Endothelial cell of umbilical vein (primary cell): ENCODE measurements at regions of chr3 and their contacts with region 1.

Region 1: GRCh38 chr3:39189959-39190269 is 2.5 kb downstream of the XIRP1 start:
- DNase-seq: peak; percentile 67
- H3K4me3 ChIP-seq: no peak overlapping the region
- H3K27ac ChIP-seq: no peak overlapping the region
- H3K4me1 ChIP-seq: no peaks in the 10 kb centered on the region
- H3K27me3 ChIP-seq: no peaks in the 10 kb centered on the region
- CTCF ChIP-seq: peak; percentile 74 to 78
- POLR2A ChIP-seq: no peak

Region 2: DNA sequence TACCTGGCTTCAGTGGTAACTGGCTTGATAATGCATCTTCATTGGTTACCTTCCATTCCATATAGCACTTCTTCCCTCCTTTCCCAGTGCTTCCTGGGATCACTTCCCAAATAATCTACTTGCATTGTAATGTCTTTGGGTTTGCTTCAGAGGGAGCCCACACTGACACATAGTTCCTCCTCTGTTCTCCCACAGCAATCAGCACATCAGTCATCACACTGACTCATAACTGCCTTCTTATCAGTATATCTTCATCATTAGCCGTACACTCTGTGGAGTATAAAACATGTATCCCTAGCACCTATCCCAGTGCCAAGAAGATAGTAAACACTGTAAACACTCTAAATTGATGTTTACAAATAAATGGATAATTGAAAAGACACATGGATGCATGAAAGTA is 282.5 kb before region 1 on chr3:
- CTCF ChIA-PET with region 1: no interaction called
- POLR2A ChIA-PET with region 1: no interaction called
- dilution Hi-C with region 1: no loop called
- intact Hi-C with region 1: no loop called
- DNase-seq: no peak
- H3K4me3 ChIP-seq: no peak overlapping the region
- H3K27ac ChIP-seq: no peak overlapping the region
- H3K4me1 ChIP-seq: no peaks in the 10 kb centered on the region
- H3K27me3 ChIP-seq: peaks cover 0 to 2% of the 10 kb centered on the region in 2 experiments
- CTCF ChIP-seq: no peak
- POLR2A ChIP-seq: no peak

Region 3: DNA sequence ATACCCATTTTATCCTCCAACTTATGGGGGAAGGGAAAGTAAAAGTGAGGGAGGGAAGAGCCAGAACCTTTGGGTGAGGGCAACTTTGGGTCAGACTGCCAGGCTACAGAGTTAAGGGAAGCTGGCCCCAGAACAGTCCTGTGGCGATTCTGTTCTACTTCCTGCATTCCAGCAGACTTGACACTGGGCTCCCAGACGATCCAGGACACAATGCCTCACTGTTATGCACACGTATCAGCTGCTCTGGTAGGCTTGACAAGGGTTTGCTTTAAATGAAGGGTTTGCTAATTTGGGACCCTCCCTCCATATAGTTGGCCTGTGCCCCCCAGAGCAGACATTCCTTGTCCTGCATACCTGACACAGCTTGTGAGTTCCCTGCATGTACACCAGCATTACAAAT is 93.1 kb before region 1 on chr3:
- CTCF ChIA-PET with region 1: no interaction called
- POLR2A ChIA-PET with region 1: no interaction called
- dilution Hi-C with region 1: no loop called
- intact Hi-C with region 1: no loop called
- DNase-seq: no peak
- H3K4me3 ChIP-seq: no peak overlapping the region
- H3K27ac ChIP-seq: no peak overlapping the region
- H3K4me1 ChIP-seq: no peaks in the 10 kb centered on the region
- H3K27me3 ChIP-seq: no peaks in the 10 kb centered on the region
- CTCF ChIP-seq: no peak
- POLR2A ChIP-seq: no peak

Region 4: GRCh38 chr3:39107388-39108199 is 82.3 kb before region 1 on chr3 and contains the starts of genes GORASP1 and TTC21A:
- CTCF ChIA-PET with region 1: interaction called, 5 read pairs
- POLR2A ChIA-PET with region 1: no interaction called
- dilution Hi-C with region 1: loop called (anchors 5 kb)
- intact Hi-C with region 1: no loop called
- DNase-seq: peak; percentile 86
- H3K4me3 ChIP-seq: peak within 1 kb of the TSS; percentile 69 to 84 (median 78)
- H3K27ac ChIP-seq: peak within 1 kb of the TSS; percentile 75
- H3K4me1 ChIP-seq: peaks cover 18% of the 10 kb centered on the region
- H3K27me3 ChIP-seq: no peaks in the 10 kb centered on the region
- CTCF ChIP-seq: no peak
- POLR2A ChIP-seq: peak; percentile 67
- total RNA-seq, gene GORASP1: 68.0 and 74.7 TPM in 2 replicates
- total RNA-seq, gene TTC21A: 6.3 and 7.8 TPM in 2 replicates

Region 5: GRCh38 chr3:39166134-39166731 is 23.7 kb before region 1 on chr3:
- CTCF ChIA-PET with region 1: interaction called, 10 read pairs
- POLR2A ChIA-PET with region 1: no interaction called
- dilution Hi-C with region 1: no loop called
- intact Hi-C with region 1: no loop called
- DNase-seq: peak; percentile 94
- H3K4me3 ChIP-seq: no peak overlapping the region
- H3K27ac ChIP-seq: peak overlapping the region; percentile 79
- H3K4me1 ChIP-seq: peaks cover 29% of the 10 kb centered on the region
- H3K27me3 ChIP-seq: no peaks in the 10 kb centered on the region
- CTCF ChIP-seq: no peak
- POLR2A ChIP-seq: peak; percentile 37

Region 6: DNA sequence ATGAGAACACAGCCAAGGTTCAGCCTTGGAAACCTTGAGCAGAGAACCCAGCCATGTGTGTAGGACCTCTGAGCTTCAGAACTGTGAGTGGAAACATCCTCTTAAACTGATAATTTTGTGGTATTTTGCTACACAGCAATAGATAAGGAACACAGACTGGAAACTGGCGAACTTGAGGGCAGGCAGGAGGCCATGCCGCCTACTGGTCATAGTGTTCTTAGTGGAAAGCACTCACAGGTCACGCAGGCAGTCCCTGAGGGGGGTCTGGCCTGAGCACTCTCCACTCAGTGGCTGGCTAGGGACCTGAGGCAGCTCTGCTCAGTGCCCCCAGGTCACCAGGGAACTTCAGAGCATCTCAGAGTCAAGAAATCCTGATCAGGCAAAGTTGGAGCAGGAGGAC is 12.2 kb after region 1 on chr3:
- CTCF ChIA-PET with region 1: interaction called, 13 read pairs
- POLR2A ChIA-PET with region 1: no interaction called
- dilution Hi-C with region 1: no loop called
- intact Hi-C with region 1: no loop called
- DNase-seq: no peak
- H3K4me3 ChIP-seq: no peak overlapping the region
- H3K27ac ChIP-seq: no peak overlapping the region
- H3K4me1 ChIP-seq: no peaks in the 10 kb centered on the region
- H3K27me3 ChIP-seq: peaks cover 6 to 12% of the 10 kb centered on the region in 2 experiments
- CTCF ChIP-seq: peak in 1 of 2 donors; percentile 14
- POLR2A ChIP-seq: no peak

Region 7: DNA sequence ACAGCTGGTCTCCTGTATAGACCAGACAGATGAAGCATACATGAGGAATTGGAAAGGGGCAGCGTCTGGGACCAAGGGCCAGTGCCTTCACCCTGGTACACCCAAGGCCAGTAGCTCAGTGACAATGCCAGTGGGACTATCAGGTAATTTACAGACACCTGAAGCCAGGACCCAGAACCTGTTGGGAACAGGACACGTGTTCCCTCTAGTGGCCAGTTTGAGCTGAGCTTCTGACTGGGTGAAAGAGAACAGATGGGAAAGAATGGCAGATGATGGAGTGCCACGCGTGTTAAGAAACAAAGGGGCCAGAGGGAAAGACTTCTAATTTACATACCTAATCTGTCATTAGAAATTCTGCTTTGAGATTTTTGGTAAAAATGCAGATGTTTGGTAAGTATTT is 188.2 kb after region 1 on chr3:
- CTCF ChIA-PET with region 1: interaction called, 12 read pairs
- POLR2A ChIA-PET with region 1: no interaction called
- dilution Hi-C with region 1: no loop called
- intact Hi-C with region 1: loop called (anchors 1 kb)
- DNase-seq: peak; percentile 38
- H3K4me3 ChIP-seq: no peak overlapping the region
- H3K27ac ChIP-seq: no peak overlapping the region
- H3K4me1 ChIP-seq: peaks cover 18% of the 10 kb centered on the region
- H3K27me3 ChIP-seq: peaks cover 0 to 2% of the 10 kb centered on the region in 2 experiments
- CTCF ChIP-seq: peak; percentile 69 to 77
- POLR2A ChIP-seq: no peak